Activated B cell treated with CpG ODN at 0.5 μM for 24 hours (primary cell): ENCODE measurements at regions of chr1 and their contacts with region 1.

Region 1: GRCh38 chr1:183139281-183139942 is 46.7 kb upstream of the LAMC2 start:
- DNase-seq: no peak
- ATAC-seq: no peak
- H3K4me3 Mint-ChIP-seq: no peak overlapping the region
- H3K27ac Mint-ChIP-seq: peak overlapping the region; percentile 8
- H3K4me1 Mint-ChIP-seq: peaks cover 9% of the 10 kb centered on the region
- H3K27me3 Mint-ChIP-seq: no peaks in the 10 kb centered on the region
- CTCF ChIP-seq: no peak

Region 2: GRCh38 chr1:182568647-182569284 is 570.6 kb before region 1 on chr1:
- CTCF ChIA-PET with region 1: no interaction called
- POLR2A ChIA-PET with region 1: no interaction called
- intact Hi-C with region 1: no loop called
- DNase-seq: no peak
- ATAC-seq: peak; percentile 65
- H3K4me3 Mint-ChIP-seq: no peak overlapping the region
- H3K27ac Mint-ChIP-seq: no peak overlapping the region
- H3K4me1 Mint-ChIP-seq: peaks cover 21% of the 10 kb centered on the region
- H3K27me3 Mint-ChIP-seq: no peaks in the 10 kb centered on the region
- CTCF ChIP-seq: no peak

Region 3: DNA sequence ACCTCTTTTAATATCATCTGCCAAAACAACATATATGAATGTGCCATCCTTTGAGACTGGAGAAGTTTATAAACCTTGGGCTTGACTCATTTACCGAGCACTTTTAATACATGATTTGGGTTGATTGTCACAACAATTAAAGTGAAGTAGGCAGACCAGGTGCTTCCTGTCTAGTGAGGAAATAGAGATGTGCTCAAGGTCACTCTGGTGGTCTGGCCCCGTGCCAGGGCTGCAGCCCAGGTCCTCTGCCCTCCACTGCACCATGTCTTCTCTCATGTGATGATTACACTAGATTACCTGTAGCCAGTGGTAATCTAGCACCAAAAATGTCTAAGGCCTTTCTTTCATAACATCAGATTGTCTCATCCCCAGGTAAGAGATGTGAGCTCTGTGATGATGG is 15.2 kb before region 1 on chr1:
- CTCF ChIA-PET with region 1: no interaction called
- POLR2A ChIA-PET with region 1: no interaction called
- intact Hi-C with region 1: no loop called
- DNase-seq: no peak
- ATAC-seq: peak; percentile 18
- H3K4me3 Mint-ChIP-seq: no peak overlapping the region
- H3K27ac Mint-ChIP-seq: no peak overlapping the region
- H3K4me1 Mint-ChIP-seq: peaks cover 17% of the 10 kb centered on the region
- H3K27me3 Mint-ChIP-seq: no peaks in the 10 kb centered on the region
- CTCF ChIP-seq: no peak

Region 4: DNA sequence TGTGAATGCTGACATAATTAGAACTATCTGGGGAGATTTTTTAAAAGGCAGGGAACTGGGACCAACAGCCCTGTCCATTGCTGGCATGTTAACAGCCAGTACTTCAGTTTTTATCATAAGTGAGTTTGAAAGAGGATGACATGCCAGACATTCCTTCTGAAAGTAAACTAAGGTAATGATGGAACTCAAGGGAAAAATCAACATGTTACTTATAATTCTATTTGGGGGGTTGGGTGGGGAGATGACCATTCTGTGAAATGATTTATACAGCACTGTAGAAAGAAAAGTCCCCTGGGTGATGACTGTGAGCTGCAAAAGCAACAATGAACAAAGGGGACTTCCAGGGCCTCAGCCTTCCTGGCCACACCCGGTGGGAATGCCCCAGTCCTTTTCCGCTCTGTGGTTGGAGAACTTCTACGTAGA is 41.2 kb after region 1 on chr1:
- CTCF ChIA-PET with region 1: no interaction called
- POLR2A ChIA-PET with region 1: interaction called, 3 read pairs
- intact Hi-C with region 1: loop called (anchors 10 kb)
- DNase-seq: no peak
- ATAC-seq: peak; percentile 72
- H3K4me3 Mint-ChIP-seq: peak overlapping the region; percentile 41
- H3K27ac Mint-ChIP-seq: peak overlapping the region; percentile 53
- H3K4me1 Mint-ChIP-seq: peaks cover 13% of the 10 kb centered on the region
- H3K27me3 Mint-ChIP-seq: peaks cover 4% of the 10 kb centered on the region
- CTCF ChIP-seq: no peak